ENCODE measurements at regions of chr2 and their contacts with region 1.

Region 1: GRCh38 chr2:122491011-122491410 is 735.6 kb downstream of the TSN start:
- DNase-seq: no peak
- ATAC-seq: no peak

Region 2: DNA sequence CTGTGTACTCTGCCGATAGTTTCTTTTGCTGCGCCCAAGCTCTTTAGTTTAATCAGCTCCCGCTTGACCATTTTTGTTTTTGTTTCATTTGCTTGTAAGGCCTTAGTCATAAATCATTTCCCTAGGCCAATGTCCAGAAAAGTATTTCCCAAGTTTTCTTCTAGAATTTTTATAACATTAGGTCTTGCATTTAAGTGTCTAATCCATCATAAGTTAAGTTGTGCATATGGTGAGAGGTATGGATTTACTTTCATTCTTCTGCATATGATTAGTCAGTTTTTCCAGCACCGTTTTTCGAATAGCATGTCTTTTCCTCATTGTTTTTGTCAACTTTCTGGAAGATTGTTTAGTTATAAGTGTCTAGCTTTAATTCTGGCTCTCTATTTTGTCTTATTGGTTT is 1049.3 kb after region 1 on chr2:
- intact Hi-C with region 1: loop called (anchors 10 kb)
- DNase-seq: no peak
- ATAC-seq: no peak

Measured in left ventricle myocardium superior (tissue), 1 donor.